Uterus (tissue), 4 donors: ENCODE measurements at regions of chr1 and their contacts with region 1.

Region 1: GRCh38 chr1:119613769-119614720 is 34.0 kb downstream of the ZNF697 start:
- DNase-seq: peak; percentile 85 to 86
- H3K4me3 ChIP-seq: no peak overlapping the region
- H3K27ac ChIP-seq: no peak overlapping the region
- H3K4me1 ChIP-seq: no peaks in the 10 kb centered on the region
- H3K27me3 ChIP-seq: no peaks in the 10 kb centered on the region
- CTCF ChIP-seq: peak; percentile 82 to 88 (median 84)
- POLR2A ChIP-seq: no peak

Region 2: DNA sequence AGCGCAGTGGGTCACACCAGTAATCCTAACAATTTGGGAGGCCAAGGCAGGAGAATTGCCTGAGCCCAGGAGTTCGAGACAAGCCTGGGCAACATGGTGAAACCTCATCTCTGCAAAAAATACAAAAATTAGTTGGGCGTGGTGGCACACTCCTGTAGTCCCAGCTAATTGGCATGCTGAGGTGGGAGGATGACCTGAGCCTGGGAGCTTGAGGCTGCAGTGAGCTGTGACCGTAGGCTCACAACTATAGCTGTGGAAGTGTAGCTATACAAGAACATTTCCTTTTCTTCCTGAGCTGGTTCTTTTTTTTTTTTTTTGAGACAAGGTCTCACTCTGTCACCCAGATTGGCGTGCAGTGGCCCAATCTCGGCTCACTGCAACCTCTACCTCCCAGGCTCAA is 53.1 kb after region 1 on chr1:
- intact Hi-C with region 1: loop called (anchors 5 kb)
- DNase-seq: no peak
- H3K4me3 ChIP-seq: no peak overlapping the region
- H3K27ac ChIP-seq: no peak overlapping the region
- H3K4me1 ChIP-seq: no peaks in the 10 kb centered on the region
- H3K27me3 ChIP-seq: no peaks in the 10 kb centered on the region
- CTCF ChIP-seq: no peak
- POLR2A ChIP-seq: no peak

Region 3: DNA sequence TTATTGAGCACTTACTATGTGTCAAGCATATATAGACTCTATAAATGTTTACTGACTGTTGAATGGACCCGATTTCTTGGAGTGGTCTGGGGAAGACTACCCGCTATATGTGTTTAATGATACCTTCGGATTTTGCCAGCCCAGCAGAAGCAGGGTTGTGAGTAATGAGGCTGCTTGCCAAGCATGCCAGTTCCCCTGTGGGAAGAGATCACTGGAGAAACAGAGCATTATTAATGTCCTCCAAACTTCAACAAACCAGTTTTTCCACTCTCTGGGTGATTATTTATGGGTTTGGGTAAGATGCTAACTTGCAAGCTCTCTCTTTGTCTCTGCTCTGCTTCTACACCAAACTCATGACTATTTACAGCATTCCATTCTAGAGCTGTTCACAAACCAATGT is 72.6 kb after region 1 on chr1:
- intact Hi-C with region 1: no loop called
- DNase-seq: no peak
- H3K4me3 ChIP-seq: no peak overlapping the region
- H3K27ac ChIP-seq: no peak overlapping the region
- H3K4me1 ChIP-seq: no peaks in the 10 kb centered on the region
- H3K27me3 ChIP-seq: no peaks in the 10 kb centered on the region
- CTCF ChIP-seq: no peak
- POLR2A ChIP-seq: no peak